ENCODE measurements at regions of chr2 and their contacts with region 1.

Region 1: GRCh38 chr2:25342372-25343186 is 854 bp upstream of the DNMT3A start:
- DNase-seq: peak; percentile 95
- H3K4me3 Mint-ChIP-seq: peak overlapping the region; percentile 87
- H3K27ac Mint-ChIP-seq: peak overlapping the region; percentile 92
- H3K4me1 Mint-ChIP-seq: peaks cover 32% of the 10 kb centered on the region
- H3K27me3 Mint-ChIP-seq: no peaks in the 10 kb centered on the region

Region 2: DNA sequence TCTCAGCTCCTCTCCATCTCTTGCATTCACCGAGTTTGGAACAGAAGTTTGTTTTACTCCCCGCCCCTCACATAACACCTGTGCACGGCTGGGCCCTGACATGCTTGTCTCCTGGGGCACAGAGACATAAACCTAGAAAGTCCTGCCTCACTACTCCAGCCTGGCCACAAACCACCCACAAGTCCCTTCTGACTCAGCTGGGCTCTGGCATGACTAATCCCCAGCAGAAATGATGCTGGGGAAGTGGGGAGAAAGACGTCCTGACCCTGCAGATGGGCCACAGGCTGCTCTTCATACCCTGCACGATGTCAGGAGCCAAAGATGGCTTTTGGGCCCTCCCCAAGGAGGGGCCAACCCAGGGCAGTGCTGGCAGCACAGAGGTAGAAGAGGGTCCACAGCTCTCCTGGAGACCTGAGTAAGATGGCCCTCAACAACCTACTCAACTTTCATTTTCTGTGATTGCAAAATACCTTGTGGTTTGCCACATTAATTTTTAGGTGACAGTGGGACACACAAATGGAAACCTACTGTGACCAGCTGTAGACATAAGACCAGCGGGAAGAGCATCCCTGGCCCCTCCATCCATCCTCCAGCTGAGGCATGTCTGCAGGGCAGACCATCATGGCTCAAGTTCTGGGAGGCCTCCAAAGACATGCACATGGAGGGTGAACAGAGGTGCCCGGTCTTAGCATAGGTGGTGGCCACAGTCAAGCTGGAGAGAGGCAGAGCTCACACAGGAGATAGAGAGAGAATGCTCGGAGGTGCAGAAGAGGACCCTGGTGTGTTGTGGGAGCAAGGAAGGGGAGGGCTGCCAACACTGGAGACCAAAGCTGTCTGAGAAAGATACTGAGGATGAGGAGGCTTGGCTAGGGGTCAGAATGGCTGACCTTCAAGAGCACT is 40.9 kb before region 1 on chr2:
- intact Hi-C with region 1: loop called (anchors 5 kb)
- DNase-seq: peak; percentile 89
- H3K4me3 Mint-ChIP-seq: peak overlapping the region; percentile 58
- H3K27ac Mint-ChIP-seq: peak overlapping the region; percentile 78
- H3K4me1 Mint-ChIP-seq: peaks cover 40% of the 10 kb centered on the region
- H3K27me3 Mint-ChIP-seq: no peaks in the 10 kb centered on the region

Region 3: DNA sequence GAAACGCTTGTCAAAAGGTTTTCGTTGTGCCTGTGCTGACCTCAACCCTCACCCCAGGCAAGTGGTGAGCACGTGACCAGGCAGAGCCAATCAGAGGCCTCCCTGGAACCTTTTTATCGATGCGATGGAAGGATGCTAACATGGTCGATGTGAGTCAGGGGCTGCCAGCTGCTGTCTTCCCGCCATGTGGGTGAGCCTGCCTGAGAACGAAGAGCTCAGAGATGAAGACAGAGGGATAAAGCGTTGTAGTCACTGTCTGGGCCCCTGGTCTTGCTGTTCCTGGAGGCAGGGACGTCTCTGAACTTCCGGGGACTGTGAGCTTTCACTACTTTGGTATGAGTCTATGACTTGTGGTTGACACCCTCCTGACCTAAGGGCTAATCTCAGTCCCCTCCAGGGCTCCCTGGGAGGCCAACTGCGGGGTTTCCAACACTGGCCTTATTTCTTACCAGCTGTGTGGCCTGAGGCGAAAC is 19.5 kb before region 1 on chr2:
- intact Hi-C with region 1: no loop called
- DNase-seq: no peak
- H3K4me3 Mint-ChIP-seq: peak overlapping the region; percentile 76
- H3K27ac Mint-ChIP-seq: peak overlapping the region; percentile 93
- H3K4me1 Mint-ChIP-seq: peaks cover 48% of the 10 kb centered on the region
- H3K27me3 Mint-ChIP-seq: no peaks in the 10 kb centered on the region

Region 4: DNA sequence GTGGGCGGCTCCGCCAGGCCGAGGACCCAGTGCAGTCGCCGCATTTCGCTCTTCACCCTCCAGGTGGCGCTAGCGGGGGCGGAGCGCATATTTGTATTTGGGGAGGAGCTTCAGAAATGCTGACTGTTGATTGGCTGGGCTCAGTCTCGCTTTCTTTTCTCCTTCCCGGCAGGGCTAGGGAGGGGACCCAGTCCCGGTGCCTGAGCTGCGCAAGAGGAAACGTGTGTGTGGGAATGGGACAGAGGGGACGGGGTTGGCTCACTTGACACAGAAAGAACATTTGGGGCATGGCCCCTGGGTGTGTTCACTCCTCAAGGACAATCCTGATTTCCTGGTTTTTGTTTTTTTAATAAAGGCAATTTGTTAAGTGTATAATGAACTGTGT is 19.5 kb after region 1 on chr2:
- intact Hi-C with region 1: loop called (anchors 2 kb)
- DNase-seq: peak; percentile 99
- H3K4me3 Mint-ChIP-seq: peak overlapping the region; percentile 84
- H3K27ac Mint-ChIP-seq: peak overlapping the region; percentile 91
- H3K4me1 Mint-ChIP-seq: peaks cover 19% of the 10 kb centered on the region
- H3K27me3 Mint-ChIP-seq: no peaks in the 10 kb centered on the region

Region 5: DNA sequence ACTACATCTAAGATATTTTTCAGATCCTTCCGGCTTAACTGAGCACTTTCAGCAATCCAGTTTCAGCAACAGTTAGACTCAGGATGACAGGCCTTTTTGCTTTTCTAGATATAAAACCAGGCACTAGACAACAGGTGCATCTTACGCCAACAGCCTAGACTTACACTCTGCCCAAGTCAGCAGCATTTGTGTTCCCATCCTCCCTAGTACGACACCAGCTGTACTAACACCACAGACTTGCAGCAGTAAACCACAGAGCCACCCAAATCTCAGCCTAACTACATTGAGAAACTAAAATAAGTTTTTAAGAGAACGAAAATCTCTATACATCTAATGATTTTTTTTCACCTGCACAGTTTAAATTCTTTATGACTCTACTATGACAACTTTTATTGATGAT is 89.0 kb after region 1 on chr2:
- intact Hi-C with region 1: no loop called
- DNase-seq: no peak
- H3K4me3 Mint-ChIP-seq: no peak overlapping the region
- H3K27ac Mint-ChIP-seq: no peak overlapping the region
- H3K4me1 Mint-ChIP-seq: peaks cover 9% of the 10 kb centered on the region
- H3K27me3 Mint-ChIP-seq: no peaks in the 10 kb centered on the region

Region 6: GRCh38 chr2:25521665-25522387 is 179.2 kb after region 1 on chr2:
- intact Hi-C with region 1: loop called (anchors 2 kb)
- DNase-seq: peak; percentile 89
- H3K4me3 Mint-ChIP-seq: peak overlapping the region; percentile 18
- H3K27ac Mint-ChIP-seq: peak overlapping the region; percentile 45
- H3K4me1 Mint-ChIP-seq: peaks cover 19% of the 10 kb centered on the region
- H3K27me3 Mint-ChIP-seq: no peaks in the 10 kb centered on the region